ENCODE measurements at regions of chr9 and their contacts with region 1.

Region 1: DNA sequence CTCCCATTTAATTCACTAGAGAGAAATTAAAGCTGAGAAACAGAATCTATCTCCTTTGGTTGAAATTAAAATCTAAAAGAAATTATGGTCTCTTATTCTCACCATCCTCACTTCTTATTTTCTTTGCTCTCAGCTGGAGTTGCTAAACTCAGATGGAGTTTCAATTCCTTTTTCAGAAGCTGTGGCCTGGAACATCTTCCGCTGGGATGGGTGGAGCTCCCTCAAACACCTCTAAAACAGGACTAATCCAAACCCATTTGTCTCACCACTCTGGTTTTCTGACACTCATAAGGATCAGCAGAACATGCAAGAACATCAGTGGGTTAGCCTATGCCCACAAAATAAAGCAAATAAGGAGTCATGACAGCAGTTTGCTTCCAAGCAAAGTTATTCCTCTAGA is 39.6 kb upstream of the CEP78 start:
- DNase-seq: no peak
- H3K4me3 Mint-ChIP-seq: no peak overlapping the region
- H3K27ac Mint-ChIP-seq: no peak overlapping the region
- H3K4me1 Mint-ChIP-seq: peaks cover 14% of the 10 kb centered on the region
- H3K27me3 Mint-ChIP-seq: no peaks in the 10 kb centered on the region

Region 2: GRCh38 chr9:78235756-78236538 is 39.7 kb after region 1 on chr9 and contains the start of gene CEP78:
- CTCF ChIA-PET with region 1: interaction called, 3 read pairs
- intact Hi-C with region 1: loop called (anchors 2 kb)
- DNase-seq: peak; percentile 91
- H3K4me3 Mint-ChIP-seq: peak within 1 kb of the TSS; percentile 96
- H3K27ac Mint-ChIP-seq: peak within 1 kb of the TSS; percentile 91
- H3K4me1 Mint-ChIP-seq: peaks cover 34% of the 10 kb centered on the region
- H3K27me3 Mint-ChIP-seq: no peaks in the 10 kb centered on the region
- total RNA-seq, gene CEP78: 39.5 to 39.7 TPM

Measured in activated naive CD4-positive, alpha-beta T cell treated with anti-CD3 and anti-CD28 coated beads for 36 hours (primary cell).